ENCODE measurements at regions of chr16 and their contacts with region 1.

Region 1: GRCh38 chr16:67349172-67349571 is 22.6 kb downstream of the LRRC36 start:
- DNase-seq: no peak
- ATAC-seq: peak; percentile 49
- H3K4me3 Mint-ChIP-seq: no peak overlapping the region
- H3K27ac Mint-ChIP-seq: no peak overlapping the region
- H3K4me1 Mint-ChIP-seq: no peaks in the 10 kb centered on the region
- H3K27me3 Mint-ChIP-seq: peaks cover 7% of the 10 kb centered on the region

Region 2: GRCh38 chr16:67399181-67399733 is 50.1 kb after region 1 on chr16:
- CTCF ChIA-PET with region 1: interaction called, 25 read pairs
- DNase-seq: peak; percentile 55
- ATAC-seq: peak; percentile 83
- H3K4me3 Mint-ChIP-seq: no peak overlapping the region
- H3K27ac Mint-ChIP-seq: no peak overlapping the region
- H3K4me1 Mint-ChIP-seq: no peaks in the 10 kb centered on the region
- H3K27me3 Mint-ChIP-seq: peaks cover 22% of the 10 kb centered on the region

Region 3: GRCh38 chr16:67490335-67491096 is 141.3 kb after region 1 on chr16:
- CTCF ChIA-PET with region 1: no interaction called
- DNase-seq: no peak
- ATAC-seq: no peak
- H3K4me3 Mint-ChIP-seq: no peak overlapping the region
- H3K27ac Mint-ChIP-seq: no peak overlapping the region
- H3K4me1 Mint-ChIP-seq: no peaks in the 10 kb centered on the region
- H3K27me3 Mint-ChIP-seq: no peaks in the 10 kb centered on the region

Measured in activated CD8-positive, alpha-beta memory T cell treated with anti-CD3 and anti-CD28 coated beads, Interleukin-2, amount 10 ng/mL, durations not matched to agents 7 days and 5 days (primary cell).